ENCODE measurements at regions of chr10 and their contacts with region 1.

Region 1: DNA sequence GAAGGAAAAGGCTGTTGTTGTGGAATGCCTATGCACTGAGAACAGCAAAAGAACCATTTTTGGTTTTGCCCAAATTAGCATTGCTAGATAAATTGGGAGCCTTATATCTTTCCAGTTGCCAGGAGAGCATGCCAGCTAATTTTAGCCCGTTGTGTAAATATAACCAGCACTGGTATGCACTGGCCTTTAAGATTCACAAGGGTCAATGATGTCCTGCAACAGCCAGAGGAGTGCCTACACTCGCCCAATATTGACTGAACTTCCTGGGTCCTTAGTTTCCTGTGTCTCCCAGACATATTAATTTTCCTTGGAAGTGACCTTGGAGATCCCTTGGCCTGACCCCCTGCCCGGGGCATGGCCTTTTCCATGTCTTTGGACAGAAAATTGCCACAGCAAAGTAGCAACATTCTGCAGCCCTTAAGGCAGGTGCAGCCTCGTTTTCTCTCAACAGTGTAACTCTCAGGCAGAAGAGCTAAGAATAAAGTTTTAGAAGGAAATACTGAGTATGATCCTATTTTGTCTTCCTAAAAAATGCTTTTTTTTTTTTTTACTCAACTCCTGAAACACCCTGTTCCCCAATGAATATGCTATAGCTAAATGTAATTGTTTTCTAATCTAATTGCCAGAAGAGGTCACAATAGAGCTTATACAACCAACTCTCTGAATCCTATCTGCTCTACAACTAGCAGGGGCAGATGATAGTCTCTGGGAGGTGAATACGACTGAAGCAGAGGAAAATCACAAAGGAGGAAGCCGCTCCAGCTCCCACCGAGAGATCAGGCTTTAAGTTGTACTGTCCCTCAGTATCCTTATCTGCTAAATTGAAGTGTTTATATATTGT is 131.9 kb upstream of the PCGF5 start:
- DNase-seq: no peak
- H3K4me3 ChIP-seq: no peak overlapping the region
- CTCF ChIP-seq: no peak

Region 2: DNA sequence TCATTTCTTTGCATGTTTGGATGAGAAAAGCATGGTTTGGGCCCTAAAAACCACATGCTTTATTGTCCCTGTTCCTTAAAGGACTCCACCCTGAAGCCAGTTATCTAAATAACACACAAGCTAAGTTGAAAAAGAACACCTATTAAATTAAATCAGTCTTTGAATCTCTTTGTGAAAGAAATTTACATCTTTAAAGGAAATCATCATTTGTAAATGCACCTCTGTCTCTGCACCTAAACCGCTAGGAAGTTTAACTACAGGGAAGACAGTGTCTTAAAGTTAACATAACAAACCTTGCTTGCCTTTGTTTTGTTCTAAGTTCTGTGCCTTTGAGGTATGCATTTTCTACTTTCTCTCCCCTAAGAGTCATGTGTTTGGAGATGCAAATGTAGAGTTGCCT is 283.3 kb before region 1 on chr10:
- CTCF ChIA-PET with region 1: no interaction called
- POLR2A ChIA-PET with region 1: no interaction called
- DNase-seq: no peak
- H3K4me3 ChIP-seq: no peak overlapping the region
- CTCF ChIP-seq: no peak

Region 3: DNA sequence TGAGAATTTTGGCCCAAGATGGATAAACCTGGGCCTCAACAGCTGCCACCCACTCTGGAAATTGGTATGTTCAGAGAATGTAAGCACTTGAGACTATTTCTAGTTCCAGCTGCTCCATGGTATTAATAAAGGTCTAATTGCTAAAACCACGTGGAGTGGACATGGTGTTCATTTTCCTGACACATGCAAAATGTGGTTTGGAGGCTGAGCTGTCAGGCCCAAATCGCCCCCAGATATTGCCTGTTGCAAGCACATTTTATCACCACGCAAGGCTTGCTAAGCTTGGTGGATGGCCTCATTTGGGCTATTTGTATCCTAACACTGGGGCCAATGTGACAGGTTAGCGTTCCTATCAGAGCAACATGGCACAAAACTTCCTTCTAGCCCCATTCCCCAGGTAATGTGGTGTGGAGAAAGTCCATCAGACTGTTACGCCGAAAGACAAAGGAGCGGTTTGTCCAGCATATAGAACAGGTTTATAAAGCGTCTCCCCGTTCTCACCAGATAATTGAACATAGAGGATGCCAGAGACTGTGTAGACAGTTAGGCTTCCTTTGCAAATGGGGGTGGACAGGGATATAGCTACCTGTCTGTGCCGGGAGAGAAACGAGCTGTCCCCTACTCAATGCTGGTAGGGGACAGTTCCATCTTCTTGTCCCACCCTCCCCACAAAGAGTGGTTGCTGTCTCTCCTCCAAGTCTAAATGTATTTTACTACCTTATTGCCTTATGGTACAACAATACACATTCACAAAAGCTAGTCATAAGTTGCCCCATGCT is 89.6 kb before region 1 on chr10:
- CTCF ChIA-PET with region 1: no interaction called
- POLR2A ChIA-PET with region 1: no interaction called
- DNase-seq: no peak
- H3K4me3 ChIP-seq: no peak overlapping the region
- CTCF ChIP-seq: no peak

Region 4: GRCh38 chr10:91077549-91078071 is 10.9 kb before region 1 on chr10:
- CTCF ChIA-PET with region 1: interaction called, 20 read pairs
- POLR2A ChIA-PET with region 1: no interaction called
- DNase-seq: no peak
- H3K4me3 ChIP-seq: no peak overlapping the region
- CTCF ChIP-seq: no peak

Region 5: GRCh38 chr10:91163269-91163868 is 74.8 kb after region 1 on chr10:
- CTCF ChIA-PET with region 1: no interaction called
- POLR2A ChIA-PET with region 1: no interaction called
- DNase-seq: no peak
- H3K4me3 ChIP-seq: peak overlapping the region; percentile 75
- CTCF ChIP-seq: no peak

Region 6: GRCh38 chr10:91257310-91257709 is 168.8 kb after region 1 on chr10:
- CTCF ChIA-PET with region 1: interaction called, 116 read pairs
- POLR2A ChIA-PET with region 1: no interaction called
- DNase-seq: no peak
- H3K4me3 ChIP-seq: no peak overlapping the region
- CTCF ChIP-seq: no peak

Measured in AG04449 (cell line).